ENCODE measurements at regions of chr7 and their contacts with region 1.

Region 1: DNA sequence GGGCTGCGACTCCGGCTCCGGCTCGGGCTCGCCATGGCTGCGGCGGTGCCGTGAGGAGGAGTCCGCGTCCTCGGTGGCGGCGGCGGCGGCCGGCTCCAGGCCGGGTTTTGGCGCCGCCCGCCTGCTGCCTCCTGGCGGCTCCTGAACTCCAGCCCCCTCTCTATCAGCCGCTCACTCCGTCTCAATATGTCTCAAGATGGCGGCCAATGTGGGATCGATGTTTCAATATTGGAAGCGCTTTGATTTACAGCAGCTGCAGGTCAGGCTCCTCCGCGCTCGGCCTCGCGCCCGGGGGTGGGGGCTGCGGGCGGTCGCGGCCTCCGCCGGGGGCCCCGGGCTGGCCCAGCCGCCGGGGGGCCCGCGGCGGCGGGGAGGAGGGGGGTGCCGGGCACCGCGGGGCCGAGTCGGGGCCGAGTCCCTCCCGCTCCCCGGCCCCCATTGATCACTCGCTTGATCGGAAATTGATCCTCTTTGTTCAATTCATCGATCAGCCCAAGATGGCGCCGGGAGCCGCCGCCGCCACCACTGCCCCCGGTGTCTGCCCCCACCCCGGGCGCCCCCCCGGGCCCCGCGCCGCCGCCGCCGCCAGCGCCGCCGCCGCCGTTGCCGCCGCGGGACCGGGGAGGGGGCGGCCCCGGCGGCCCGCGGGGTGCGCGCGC is 1.5 kb upstream of the CUX1 start:
- DNase-seq: peak; percentile 86
- H3K4me3 ChIP-seq: peak overlapping the region; percentile 62 to 96 (median 79)
- H3K27ac ChIP-seq: peak overlapping the region; percentile 79 to 87 (median 85)
- H3K4me1 ChIP-seq: peaks cover 4 to 50% (median 35%) of the 10 kb centered on the region in 4 donors
- H3K27me3 ChIP-seq: no peaks in the 10 kb centered on the region
- CTCF ChIP-seq: no peak
- EP300 ChIP-seq: no peak
- POLR2A ChIP-seq: no peak

Region 2: DNA sequence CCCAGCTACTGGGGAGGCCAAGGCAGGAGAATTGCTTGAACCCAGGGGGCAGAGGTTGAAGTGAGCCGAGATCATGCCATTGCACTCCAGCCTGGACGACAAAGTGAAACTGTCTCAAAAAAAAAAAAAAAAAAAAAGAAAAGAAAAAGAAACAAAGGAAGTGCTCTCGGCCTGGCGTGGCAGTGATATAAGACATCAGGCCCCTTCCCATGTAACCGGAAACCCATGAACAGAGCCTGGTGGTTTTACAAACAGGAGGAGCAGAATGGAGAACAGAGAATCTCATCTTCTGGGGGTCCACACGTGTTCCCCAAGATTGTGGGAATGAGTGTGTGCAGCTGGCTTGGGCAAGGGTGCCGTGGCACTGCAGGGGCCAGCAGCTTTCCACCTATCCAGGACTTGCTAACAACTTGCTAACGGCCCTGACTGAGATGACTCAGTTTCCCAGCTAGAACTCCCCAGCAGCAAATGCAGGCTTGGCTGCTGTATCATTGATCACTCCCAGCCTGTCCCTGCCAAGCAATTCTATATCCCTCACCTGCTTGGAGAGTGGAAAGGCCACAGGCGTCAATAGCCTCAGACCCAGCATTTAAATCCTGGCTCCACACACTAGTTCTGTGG is 350.3 kb before region 1 on chr7:
- intact Hi-C with region 1: no loop called
- DNase-seq: peak; percentile 37
- H3K4me3 ChIP-seq: no peak overlapping the region
- H3K27ac ChIP-seq: no peak overlapping the region
- H3K4me1 ChIP-seq: no peaks in the 10 kb centered on the region
- H3K27me3 ChIP-seq: peaks cover 0 to 6% (median 0%) of the 10 kb centered on the region in 3 donors
- CTCF ChIP-seq: no peak
- EP300 ChIP-seq: no peak
- POLR2A ChIP-seq: no peak

Region 3: DNA sequence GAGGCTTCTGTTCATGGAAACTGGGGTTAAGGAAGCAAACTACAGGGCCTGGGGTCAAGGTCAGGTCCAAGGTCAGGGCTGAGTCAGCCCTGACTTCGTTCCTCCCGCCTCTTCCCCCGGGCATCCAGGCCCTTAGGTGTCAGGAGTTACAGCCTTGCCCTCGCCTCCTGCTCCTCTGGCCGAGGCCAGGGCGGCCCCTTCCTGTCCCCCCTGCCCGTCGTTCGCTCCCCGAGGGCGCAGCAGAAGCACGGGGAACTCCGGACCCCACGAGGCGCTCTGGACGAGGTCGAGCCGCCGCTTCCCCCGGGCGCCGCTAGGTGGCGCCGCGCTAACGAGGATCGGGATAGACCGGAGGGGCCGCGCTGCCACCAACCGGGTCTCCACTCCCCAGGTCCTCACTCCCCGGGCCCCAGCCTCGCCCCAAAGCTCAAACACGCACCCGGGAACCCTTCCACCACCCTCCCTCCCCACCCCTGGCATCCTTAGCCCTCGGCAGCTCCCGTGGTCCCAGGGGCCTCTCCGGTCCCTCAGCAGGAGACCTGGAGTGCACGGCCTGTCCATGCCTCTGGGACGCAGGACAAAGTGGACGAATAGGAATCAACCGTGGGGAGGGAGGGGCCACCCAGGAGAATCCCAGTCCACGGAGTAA is 127.7 kb before region 1 on chr7:
- intact Hi-C with region 1: loop called (anchors 1 kb)
- DNase-seq: peak; percentile 88
- H3K4me3 ChIP-seq: peak overlapping the region in 3 of 4 donors; percentile 10 to 34 (median 28)
- H3K27ac ChIP-seq: no peak overlapping the region
- H3K4me1 ChIP-seq: peaks cover 0 to 13% (median 9%) of the 10 kb centered on the region in 4 donors
- H3K27me3 ChIP-seq: no peaks in the 10 kb centered on the region
- CTCF ChIP-seq: peak; percentile 92 to 95 (median 93)
- EP300 ChIP-seq: no peak
- POLR2A ChIP-seq: no peak

Region 4: DNA sequence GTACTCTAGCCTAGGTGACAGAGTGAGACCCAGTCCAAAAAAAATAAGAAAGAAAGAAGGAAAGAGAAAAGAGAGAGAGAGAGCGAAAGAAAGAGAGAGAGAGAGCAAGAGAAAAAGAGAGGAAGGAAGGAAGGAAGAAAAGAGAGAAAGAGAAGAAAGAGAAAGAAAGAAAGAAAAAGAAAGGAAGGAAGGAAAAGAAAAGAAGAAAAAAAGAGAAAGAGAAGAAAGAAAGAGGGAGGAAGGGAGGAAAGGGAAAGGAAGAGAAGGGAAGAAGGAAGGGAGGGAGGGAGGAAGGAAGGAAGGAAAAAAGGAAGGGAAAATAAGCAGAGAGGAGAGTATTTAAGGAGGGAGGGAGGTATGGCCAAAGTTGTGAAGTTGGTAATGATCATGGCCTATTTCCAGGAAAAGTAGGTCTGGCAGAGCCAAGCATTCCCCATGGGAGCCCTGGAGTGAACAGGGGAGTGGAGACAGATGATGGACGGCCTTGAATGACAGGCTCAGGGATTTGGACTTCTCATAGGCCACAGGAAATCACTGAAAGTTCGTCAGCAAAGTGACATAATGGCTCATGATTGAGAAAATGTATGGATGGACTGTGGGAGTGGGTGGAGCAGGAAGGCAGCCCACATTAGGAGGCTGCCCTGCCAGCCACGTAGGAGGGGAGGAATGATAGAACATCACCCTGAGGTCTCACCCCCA is 43.3 kb before region 1 on chr7:
- intact Hi-C with region 1: no loop called
- DNase-seq: no peak
- H3K4me3 ChIP-seq: no peak overlapping the region
- H3K27ac ChIP-seq: no peak overlapping the region
- H3K4me1 ChIP-seq: no peaks in the 10 kb centered on the region
- H3K27me3 ChIP-seq: no peaks in the 10 kb centered on the region
- CTCF ChIP-seq: no peak
- EP300 ChIP-seq: no peak
- POLR2A ChIP-seq: no peak

Region 5: DNA sequence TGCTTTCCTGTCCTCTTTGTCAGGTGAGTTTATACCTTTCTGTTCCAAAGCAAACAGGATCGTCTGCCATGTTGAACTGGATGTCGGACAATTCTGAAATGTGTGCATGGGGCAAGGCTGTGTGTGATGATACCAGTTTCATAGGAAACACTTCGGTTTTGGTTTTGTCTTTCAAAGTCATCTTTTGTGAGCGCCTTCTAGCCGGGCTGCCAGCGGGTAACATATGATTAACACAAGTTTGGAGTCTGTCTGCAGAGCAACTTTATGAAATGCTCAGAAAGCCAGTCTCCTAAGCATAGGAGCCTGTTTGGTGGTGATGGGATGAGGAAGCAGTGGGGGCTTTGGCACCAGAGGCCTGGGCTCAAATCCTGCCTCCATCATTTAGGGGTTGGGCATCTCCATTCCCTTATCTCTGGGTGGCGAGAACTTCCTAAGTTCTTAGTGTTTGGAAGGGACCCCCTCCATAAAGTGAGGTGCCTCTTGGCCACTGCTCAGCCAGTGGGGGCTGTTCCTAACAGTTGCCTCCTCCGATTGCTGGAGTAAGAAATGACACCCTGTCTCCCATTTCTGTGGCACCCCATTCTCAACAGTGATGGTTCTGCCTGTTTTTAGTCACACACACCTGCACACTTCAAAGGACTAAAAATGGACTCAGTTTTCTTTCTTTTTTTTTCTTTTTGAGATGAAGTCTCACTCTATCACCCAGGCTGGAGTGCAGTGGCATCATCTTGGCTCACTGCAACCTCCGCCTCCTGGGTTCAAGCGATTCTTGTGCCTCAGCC is 38.3 kb after region 1 on chr7:
- intact Hi-C with region 1: loop called (anchors 2 kb)
- DNase-seq: peak; percentile 50
- H3K4me3 ChIP-seq: no peak overlapping the region
- H3K27ac ChIP-seq: no peak overlapping the region
- H3K4me1 ChIP-seq: peaks cover 0 to 49% (median 38%) of the 10 kb centered on the region in 4 donors
- H3K27me3 ChIP-seq: no peaks in the 10 kb centered on the region
- CTCF ChIP-seq: no peak
- EP300 ChIP-seq: no peak
- POLR2A ChIP-seq: no peak

Region 6: DNA sequence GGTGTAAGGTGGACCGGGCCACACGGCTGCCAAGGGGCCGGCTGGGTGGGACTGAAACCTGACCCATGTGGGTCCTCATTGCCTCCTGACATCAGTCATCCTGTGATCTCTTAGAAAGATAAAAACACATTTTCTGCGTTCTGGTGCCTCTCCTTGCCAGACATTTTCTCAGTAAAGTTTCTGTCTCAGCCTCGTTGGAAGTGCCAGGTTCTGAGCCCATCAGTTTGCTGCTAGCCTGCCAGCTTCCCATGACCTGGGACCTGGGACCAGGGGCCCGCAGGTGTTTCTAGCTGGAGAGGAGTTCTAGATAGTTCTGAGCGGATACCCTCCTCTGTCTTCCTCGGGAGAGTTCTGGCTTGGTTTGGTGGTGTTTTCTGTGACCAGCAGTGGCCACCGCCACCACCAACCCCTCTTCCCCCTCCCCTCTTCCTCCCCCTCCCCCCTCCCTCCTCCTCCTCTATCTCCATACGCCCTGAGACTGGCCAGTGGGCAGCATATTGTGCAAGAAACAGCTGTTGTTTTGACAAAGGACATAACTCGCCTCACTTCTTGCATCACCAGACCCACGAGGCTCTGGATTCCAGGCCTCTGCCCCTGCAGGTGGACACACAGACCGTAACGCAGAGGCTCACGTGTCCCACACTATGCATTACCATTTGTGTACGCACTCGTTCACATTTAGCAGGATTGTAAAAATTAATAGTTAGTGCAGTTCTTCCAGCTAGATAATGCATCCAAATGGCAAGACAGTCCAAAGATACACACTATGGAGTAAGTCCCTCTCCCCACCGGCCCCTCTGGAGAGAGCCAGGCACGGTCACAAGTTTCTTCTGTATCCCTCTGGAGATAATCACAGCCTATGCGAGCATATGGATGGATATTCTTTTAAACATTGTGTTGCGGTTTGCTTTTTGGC is 96.1 kb after region 1 on chr7:
- intact Hi-C with region 1: loop called (anchors 5 kb)
- DNase-seq: peak; percentile 97
- H3K4me3 ChIP-seq: peak overlapping the region in 2 of 4 donors; percentile 38 to 45
- H3K27ac ChIP-seq: peak overlapping the region; percentile 38 to 93 (median 86)
- H3K4me1 ChIP-seq: peaks cover 0 to 60% (median 55%) of the 10 kb centered on the region in 4 donors
- H3K27me3 ChIP-seq: no peaks in the 10 kb centered on the region
- CTCF ChIP-seq: peak in 1 of 4 experiments; percentile 17
- EP300 ChIP-seq: peak; percentile 69 to 99 (median 98)
- POLR2A ChIP-seq: no peak

Region 7: GRCh38 chr7:102044984-102045673 is 229.2 kb after region 1 on chr7:
- intact Hi-C with region 1: loop called (anchors 5 kb)
- DNase-seq: peak; percentile 79
- H3K4me3 ChIP-seq: peak overlapping the region in 3 of 4 donors; percentile 27 to 39 (median 36)
- H3K27ac ChIP-seq: peak overlapping the region in 3 of 4 donors; percentile 56 to 74 (median 68)
- H3K4me1 ChIP-seq: peaks cover 0 to 35% (median 19%) of the 10 kb centered on the region in 4 donors
- H3K27me3 ChIP-seq: no peaks in the 10 kb centered on the region
- CTCF ChIP-seq: no peak
- EP300 ChIP-seq: no peak
- POLR2A ChIP-seq: no peak

Region 8: DNA sequence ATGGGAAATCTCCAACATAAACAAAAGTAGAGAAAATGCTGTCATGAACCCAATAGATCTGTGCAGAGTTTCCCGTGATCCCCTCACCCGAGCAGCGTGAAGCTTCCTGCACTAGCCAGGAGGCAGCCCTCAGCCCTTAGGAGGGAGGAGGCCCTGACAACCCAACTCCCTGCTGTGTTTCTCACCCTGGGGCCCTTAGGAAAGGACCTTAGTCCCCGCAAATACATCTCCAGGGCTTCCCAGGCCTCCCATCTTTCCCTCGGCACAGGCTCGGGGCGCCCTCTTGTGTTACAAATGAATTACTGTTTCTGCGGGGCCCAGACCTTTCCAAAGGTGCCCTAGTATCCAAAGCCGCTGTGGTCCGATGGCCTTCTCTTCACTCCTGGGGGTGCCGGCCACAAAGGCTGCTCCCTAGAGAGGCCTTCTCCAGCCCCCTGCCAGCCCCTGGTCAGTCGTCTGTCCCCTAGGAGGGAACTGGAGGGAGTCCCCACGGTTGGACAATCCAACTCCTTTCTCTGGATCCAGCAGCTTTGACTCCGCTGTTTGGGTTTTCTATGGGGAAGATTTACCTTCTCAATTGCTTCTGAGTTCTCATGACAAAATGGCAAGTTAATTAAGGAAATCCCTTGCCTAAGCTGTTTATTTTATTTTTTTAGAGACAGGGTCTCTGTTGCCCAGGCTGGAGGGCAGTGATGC is 420.8 kb after region 1 on chr7:
- intact Hi-C with region 1: loop called (anchors 2 kb)
- DNase-seq: peak; percentile 75
- H3K4me3 ChIP-seq: no peak overlapping the region
- H3K27ac ChIP-seq: no peak overlapping the region
- H3K4me1 ChIP-seq: peaks cover 0 to 7% (median 0%) of the 10 kb centered on the region in 4 donors
- H3K27me3 ChIP-seq: no peaks in the 10 kb centered on the region
- CTCF ChIP-seq: peak; percentile 37 to 80 (median 72)
- EP300 ChIP-seq: no peak
- POLR2A ChIP-seq: no peak

Measured in sigmoid colon (tissue), 7 donors.